Spleen (tissue), 13 donors: ENCODE measurements at regions of chr18 and their contacts with region 1.

Region 1: DNA sequence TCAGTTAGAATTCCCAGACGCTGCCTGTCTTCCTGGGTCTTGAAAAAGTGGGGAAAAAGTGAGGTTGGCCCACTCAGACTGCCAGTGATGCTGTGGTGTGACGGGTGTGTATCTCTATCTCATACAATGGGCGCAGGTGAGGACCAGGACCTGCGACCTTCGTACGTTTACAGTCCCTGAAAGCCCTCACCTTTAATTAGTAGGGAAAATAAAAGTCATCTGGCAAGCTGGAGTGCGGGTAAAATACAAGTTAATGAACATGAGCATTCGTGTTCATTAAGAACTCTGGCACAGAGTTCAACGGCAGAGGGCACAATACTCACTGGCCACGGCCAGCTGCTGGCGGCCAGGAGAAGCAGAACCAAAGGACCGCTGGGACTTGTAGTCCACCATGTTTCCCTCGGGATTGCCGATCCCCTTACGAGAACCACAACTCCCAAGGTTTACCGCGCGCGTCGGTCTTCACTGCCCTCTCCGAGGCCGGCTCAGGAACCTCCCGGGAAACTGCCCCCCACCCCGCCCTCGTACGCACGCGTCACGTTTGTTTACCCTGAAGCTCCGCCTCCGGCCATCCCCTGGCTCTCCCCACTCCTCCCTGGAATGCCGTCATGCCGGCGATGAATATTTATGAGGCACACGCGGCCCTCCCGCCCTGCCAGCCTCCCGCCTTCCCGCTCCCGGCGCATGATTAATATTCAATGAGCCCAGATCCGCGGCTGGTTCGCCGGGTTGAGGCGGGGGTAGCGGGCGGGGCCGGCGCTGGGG is 488 bp upstream of the PHLPP1 start:
- DNase-seq: peak; percentile 99
- H3K4me3 ChIP-seq: peak overlapping the region; percentile 58 to 86 (median 76)
- H3K27ac ChIP-seq: peak overlapping the region; percentile 90 to 97 (median 94)
- H3K4me1 ChIP-seq: peaks cover 14 to 45% (median 34%) of the 10 kb centered on the region in 6 donors
- H3K27me3 ChIP-seq: peaks cover 0 to 18% (median 4%) of the 10 kb centered on the region in 7 donors
- CTCF ChIP-seq: peak; percentile 57 to 84 (median 69)
- POLR2A ChIP-seq: no peak

Region 2: DNA sequence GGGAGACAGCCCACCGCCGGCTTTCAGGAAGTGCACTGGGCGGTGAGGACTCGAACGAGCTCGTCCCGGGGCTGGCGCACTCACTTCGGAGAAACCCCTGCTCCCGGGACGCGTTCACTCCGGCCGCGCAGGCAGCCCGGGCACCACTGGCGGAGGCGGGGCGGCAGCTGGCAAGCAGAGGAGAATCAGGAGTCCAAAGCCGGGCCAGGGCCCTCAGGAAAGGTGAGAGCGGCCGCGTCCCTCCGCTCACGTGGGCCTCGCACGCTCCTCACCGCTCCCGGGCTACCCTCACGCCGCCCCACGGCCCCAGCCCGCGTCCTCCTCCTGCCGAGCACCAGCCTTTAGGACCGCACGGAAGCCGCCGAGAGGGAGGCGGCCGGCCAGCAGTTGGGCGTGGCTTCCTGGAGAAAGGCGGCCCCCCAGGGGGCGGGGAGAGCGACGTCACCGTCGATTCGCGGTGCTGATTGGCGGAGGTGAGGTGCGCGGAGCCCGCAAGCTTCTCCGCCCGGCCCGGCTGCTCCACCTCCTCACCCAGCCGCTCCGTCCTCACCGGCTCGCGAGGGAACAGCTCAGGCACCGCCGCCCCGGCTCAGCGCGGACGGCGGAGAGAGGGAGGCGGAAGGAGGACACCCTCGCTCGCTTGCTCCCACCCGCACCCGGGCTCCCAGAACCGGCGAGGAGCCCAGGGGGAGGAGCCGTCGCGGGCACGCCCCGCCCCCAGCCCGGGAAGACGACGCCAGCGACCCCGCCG is 192.2 kb before region 1 on chr18 and contains the start of gene ZCCHC2:
- intact Hi-C with region 1: loop called (anchors 5 kb)
- DNase-seq: peak; percentile 99
- H3K4me3 ChIP-seq: peak within 1 kb of the TSS; percentile 63 to 94 (median 84)
- H3K27ac ChIP-seq: peak within 1 kb of the TSS; percentile 95 to 99 (median 98)
- H3K4me1 ChIP-seq: peaks cover 18 to 50% (median 36%) of the 10 kb centered on the region in 6 donors
- H3K27me3 ChIP-seq: no peaks in the 10 kb centered on the region
- CTCF ChIP-seq: peak in 4 of 11 experiments; percentile 6 to 38 (median 24)
- POLR2A ChIP-seq: peak in 1 of 3 donors; percentile 66
- total RNA-seq, gene ZCCHC2: 27.5 to 55.7 (median 40.9) TPM

Region 3: GRCh38 chr18:62584241-62585120 is 130.4 kb before region 1 on chr18:
- intact Hi-C with region 1: loop called (anchors 5 kb)
- DNase-seq: peak; percentile 91
- H3K4me3 ChIP-seq: no peak overlapping the region
- H3K27ac ChIP-seq: peak overlapping the region in 5 of 8 donors; percentile 29 to 62 (median 54)
- H3K4me1 ChIP-seq: peaks cover 11 to 38% (median 24%) of the 10 kb centered on the region in 6 donors
- H3K27me3 ChIP-seq: no peaks in the 10 kb centered on the region
- CTCF ChIP-seq: peak; percentile 86 to 99 (median 94)
- POLR2A ChIP-seq: no peak

Region 4: GRCh38 chr18:62982600-62983251 is 267.9 kb after region 1 on chr18:
- intact Hi-C with region 1: loop called (anchors 5 kb)
- DNase-seq: peak; percentile 81
- H3K4me3 ChIP-seq: peak overlapping the region in 4 of 8 donors; percentile 20 to 58 (median 33)
- H3K27ac ChIP-seq: peak overlapping the region in 1 of 8 donors; percentile 60
- H3K4me1 ChIP-seq: peaks cover 0 to 41% (median 6%) of the 10 kb centered on the region in 6 donors
- H3K27me3 ChIP-seq: no peaks in the 10 kb centered on the region
- CTCF ChIP-seq: peak; percentile 53 to 83 (median 75)
- POLR2A ChIP-seq: no peak

Region 5: DNA sequence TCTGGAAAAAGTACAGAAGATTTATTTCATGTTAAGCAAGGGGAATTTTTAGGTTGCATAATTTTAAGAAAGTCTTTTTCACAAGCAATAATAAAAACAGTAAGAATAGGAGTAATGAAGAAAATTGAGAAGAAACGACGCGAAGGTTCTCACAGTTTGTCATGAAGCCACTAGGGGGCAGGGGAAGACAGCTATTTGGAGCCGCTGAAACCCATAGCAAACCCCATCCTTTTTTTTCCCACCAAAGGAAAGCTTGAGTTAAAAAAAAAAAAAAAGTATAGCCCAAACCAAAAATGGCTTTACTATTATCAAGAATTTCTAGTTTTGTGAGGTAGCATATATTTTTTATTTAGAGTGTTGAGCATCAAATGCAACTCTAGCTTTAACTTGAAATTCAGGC is 301.4 kb after region 1 on chr18:
- intact Hi-C with region 1: no loop called
- DNase-seq: no peak
- H3K4me3 ChIP-seq: no peak overlapping the region
- H3K27ac ChIP-seq: no peak overlapping the region
- H3K4me1 ChIP-seq: no peaks in the 10 kb centered on the region
- H3K27me3 ChIP-seq: peaks cover 0 to 16% (median 0%) of the 10 kb centered on the region in 7 donors
- CTCF ChIP-seq: peak; percentile 47 to 85 (median 79)
- POLR2A ChIP-seq: no peak